ENCODE measurements at regions of chr20 and their contacts with region 1.

Region 1: GRCh38 chr20:57964011-57964862 is 254.4 kb upstream of the PMEPA1 start:
- DNase-seq: peak; percentile 23 to 28
- ATAC-seq: peak; percentile 43 to 72 (median 58)
- H3K4me3 ChIP-seq: no peak overlapping the region
- H3K27ac ChIP-seq: peak overlapping the region in 8 of 10 donors; percentile 5 to 80 (median 54)
- H3K4me1 ChIP-seq: peaks cover 3 to 44% (median 7%) of the 10 kb centered on the region in 9 donors
- H3K27me3 ChIP-seq: peaks cover 0 to 27% (median 14%) of the 10 kb centered on the region in 7 donors
- CTCF ChIP-seq: no peak

Region 2: GRCh38 chr20:57987625-57988024 is 23.4 kb after region 1 on chr20:
- intact Hi-C with region 1: loop called in 1 of 10 experiments (anchors 2 kb)
- DNase-seq: no peak
- ATAC-seq: no peak
- H3K4me3 ChIP-seq: no peak overlapping the region
- H3K27ac ChIP-seq: no peak overlapping the region
- H3K4me1 ChIP-seq: peaks cover 0 to 43% (median 8%) of the 10 kb centered on the region in 9 donors
- H3K27me3 ChIP-seq: no peaks in the 10 kb centered on the region
- CTCF ChIP-seq: no peak

Region 3: DNA sequence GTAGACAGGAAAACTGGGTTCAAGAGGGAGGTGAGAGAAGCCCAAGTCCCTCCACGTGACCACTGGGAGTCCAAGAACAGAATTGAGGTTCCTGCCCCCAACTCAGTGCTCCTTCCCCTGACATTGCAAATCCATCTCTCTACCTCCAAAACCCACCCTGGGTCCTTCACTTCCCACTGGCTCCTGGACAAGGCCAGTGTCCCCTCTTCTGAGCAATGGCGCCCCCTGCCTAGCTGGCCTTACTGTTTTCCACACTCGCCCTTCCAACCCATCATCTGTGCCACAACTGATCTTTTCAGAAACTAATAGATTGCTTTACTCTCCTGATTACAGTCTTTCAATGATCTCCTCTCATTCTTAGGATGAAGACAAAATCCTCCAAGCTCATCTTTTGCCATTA is 63.9 kb after region 1 on chr20:
- intact Hi-C with region 1: loop called in 1 of 10 experiments (anchors 10 kb)
- DNase-seq: no peak
- ATAC-seq: no peak
- H3K4me3 ChIP-seq: no peak overlapping the region
- H3K27ac ChIP-seq: no peak overlapping the region
- H3K4me1 ChIP-seq: peaks cover 0 to 16% (median 0%) of the 10 kb centered on the region in 9 donors
- H3K27me3 ChIP-seq: peaks cover 0 to 26% (median 8%) of the 10 kb centered on the region in 7 donors
- CTCF ChIP-seq: peak in 7 of 9 donors; percentile 7 to 48 (median 28)

Region 4: DNA sequence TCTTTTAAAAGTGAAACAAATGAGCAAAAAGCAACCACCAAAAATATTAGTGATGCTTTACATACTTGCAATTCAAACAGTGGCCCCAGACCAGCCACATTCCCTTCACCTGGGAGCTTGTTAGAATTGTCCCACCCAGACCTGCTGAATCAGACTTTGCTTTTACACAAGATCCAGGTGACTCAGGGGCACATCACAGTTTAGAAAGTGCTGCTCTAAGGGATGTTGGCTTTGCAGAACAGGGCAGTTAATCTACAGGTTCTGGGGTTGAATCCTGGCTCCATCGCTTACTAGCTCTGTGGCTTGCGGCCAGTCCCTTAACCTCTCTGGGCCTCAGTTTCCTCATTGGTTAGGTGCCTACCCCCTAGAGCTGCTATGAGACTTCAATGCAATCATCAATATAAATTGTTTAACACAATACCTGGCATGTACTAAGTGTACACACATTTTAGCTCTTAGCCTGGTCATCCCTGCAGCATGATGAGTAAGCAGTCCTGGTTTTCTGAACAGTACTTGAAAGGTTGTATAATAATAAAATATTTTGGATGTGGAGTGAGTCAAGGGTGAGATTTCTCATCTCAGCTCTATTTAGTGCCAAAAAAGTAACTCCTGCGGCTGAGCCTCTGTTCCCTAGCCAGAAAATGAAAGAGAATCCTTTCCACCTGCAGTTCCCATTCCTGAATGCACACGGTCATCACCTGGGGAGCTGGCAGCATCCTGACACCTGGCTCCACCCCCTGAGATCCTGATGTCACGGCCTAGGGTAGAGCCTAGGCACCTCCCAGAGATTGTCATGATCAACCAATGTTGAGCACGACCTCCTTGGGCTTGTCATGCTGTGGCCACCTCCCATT is 101.5 kb after region 1 on chr20:
- intact Hi-C with region 1: loop called in 1 of 10 experiments (anchors 10 kb)
- DNase-seq: no peak
- ATAC-seq: no peak
- H3K4me3 ChIP-seq: no peak overlapping the region
- H3K27ac ChIP-seq: no peak overlapping the region
- H3K4me1 ChIP-seq: no peaks in the 10 kb centered on the region
- H3K27me3 ChIP-seq: peaks cover 0 to 3% (median 0%) of the 10 kb centered on the region in 7 donors
- CTCF ChIP-seq: no peak

Region 5: GRCh38 chr20:58112017-58112781 is 148.0 kb after region 1 on chr20:
- intact Hi-C with region 1: no loop called
- DNase-seq: no peak
- ATAC-seq: peak in 2 of 8 donors; percentile 25 to 47
- H3K4me3 ChIP-seq: no peak overlapping the region
- H3K27ac ChIP-seq: peak overlapping the region in 6 of 10 donors; percentile 13 to 33 (median 24)
- H3K4me1 ChIP-seq: peaks cover 0 to 10% (median 0%) of the 10 kb centered on the region in 9 donors
- H3K27me3 ChIP-seq: peaks cover 0 to 12% (median 0%) of the 10 kb centered on the region in 7 donors
- CTCF ChIP-seq: no peak